A673 (cell line): ENCODE measurements at regions of chr14 and their contacts with region 1.

Region 1: GRCh38 chr14:22900081-22900799 is 17.2 kb downstream of the REM2 start:
- DNase-seq: peak; percentile 79
- H3K4me3 ChIP-seq: no peak overlapping the region
- H3K27ac ChIP-seq: no peak overlapping the region
- H3K4me1 ChIP-seq: no peaks in the 10 kb centered on the region
- H3K27me3 ChIP-seq: no peaks in the 10 kb centered on the region
- CTCF ChIP-seq: peak; percentile 68

Region 2: GRCh38 chr14:22781586-22781991 is 118.7 kb before region 1 on chr14:
- CTCF ChIA-PET with region 1: interaction called, 10 read pairs
- POLR2A ChIA-PET with region 1: no interaction called
- intact Hi-C with region 1: no loop called
- DNase-seq: peak; percentile 32
- H3K4me3 ChIP-seq: no peak overlapping the region
- H3K27ac ChIP-seq: peak overlapping the region; percentile 68
- H3K4me1 ChIP-seq: peaks cover 4% of the 10 kb centered on the region
- H3K27me3 ChIP-seq: no peaks in the 10 kb centered on the region
- CTCF ChIP-seq: no peak

Region 3: GRCh38 chr14:22822571-22823098 is 77.6 kb before region 1 on chr14:
- CTCF ChIA-PET with region 1: interaction called, 3 read pairs
- POLR2A ChIA-PET with region 1: no interaction called
- intact Hi-C with region 1: loop called (anchors 5 kb)
- DNase-seq: peak; percentile 93
- H3K4me3 ChIP-seq: peak overlapping the region; percentile 29
- H3K27ac ChIP-seq: peak overlapping the region; percentile 8
- H3K4me1 ChIP-seq: peaks cover 25% of the 10 kb centered on the region
- H3K27me3 ChIP-seq: no peaks in the 10 kb centered on the region
- CTCF ChIP-seq: peak; percentile 93

Region 4: DNA sequence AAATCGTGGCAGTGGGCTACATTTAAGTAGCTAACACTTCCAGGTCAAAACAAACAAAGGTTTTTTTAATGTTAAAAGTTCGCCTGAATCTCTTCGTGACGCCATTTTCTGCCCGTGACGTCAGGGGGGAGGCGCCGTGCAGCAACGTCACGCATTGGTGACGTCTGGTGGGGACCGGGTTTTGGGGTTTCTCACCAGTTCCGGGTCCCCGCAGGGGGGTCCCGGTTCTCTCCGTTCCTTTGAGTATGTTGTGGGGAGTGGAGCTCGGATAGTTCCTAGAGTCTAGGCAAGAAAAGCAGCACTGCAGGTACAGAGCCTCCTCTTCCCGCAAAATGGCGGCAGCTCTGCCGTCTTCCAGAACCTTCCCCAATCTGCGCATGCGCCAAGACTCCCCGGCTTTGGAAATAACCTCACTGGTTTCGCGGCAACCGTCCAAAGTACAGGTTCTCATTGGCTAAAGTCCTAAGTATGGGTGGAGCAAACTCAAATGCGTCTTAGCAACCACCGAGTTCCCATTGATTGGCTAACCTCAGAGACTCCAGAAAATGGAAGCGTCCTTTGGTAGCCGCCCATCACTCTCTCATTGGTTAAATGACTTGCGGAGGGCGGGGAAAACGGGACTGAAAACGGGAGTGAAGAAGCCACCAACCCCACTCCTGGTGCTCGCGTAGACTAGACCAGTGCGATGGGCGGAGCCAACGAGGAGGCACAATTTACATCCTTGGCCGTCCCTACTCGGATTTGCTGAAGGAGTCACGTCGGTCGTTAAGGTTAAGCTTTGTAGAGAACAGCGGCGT is 18.8 kb after region 1 on chr14 and contains the start of gene RBM23:
- CTCF ChIA-PET with region 1: interaction called, 10 read pairs
- POLR2A ChIA-PET with region 1: no interaction called
- intact Hi-C with region 1: no loop called
- DNase-seq: peak; percentile 100
- H3K4me3 ChIP-seq: peak within 1 kb of the TSS; percentile 78
- H3K27ac ChIP-seq: peak within 1 kb of the TSS; percentile 97
- H3K4me1 ChIP-seq: peaks cover 26% of the 10 kb centered on the region
- H3K27me3 ChIP-seq: no peaks in the 10 kb centered on the region
- CTCF ChIP-seq: no peak
- total RNA-seq, gene RBM23: 105 and 118 TPM in 2 replicates